ENCODE measurements at regions of chr1 and their contacts with region 1.

Region 1: DNA sequence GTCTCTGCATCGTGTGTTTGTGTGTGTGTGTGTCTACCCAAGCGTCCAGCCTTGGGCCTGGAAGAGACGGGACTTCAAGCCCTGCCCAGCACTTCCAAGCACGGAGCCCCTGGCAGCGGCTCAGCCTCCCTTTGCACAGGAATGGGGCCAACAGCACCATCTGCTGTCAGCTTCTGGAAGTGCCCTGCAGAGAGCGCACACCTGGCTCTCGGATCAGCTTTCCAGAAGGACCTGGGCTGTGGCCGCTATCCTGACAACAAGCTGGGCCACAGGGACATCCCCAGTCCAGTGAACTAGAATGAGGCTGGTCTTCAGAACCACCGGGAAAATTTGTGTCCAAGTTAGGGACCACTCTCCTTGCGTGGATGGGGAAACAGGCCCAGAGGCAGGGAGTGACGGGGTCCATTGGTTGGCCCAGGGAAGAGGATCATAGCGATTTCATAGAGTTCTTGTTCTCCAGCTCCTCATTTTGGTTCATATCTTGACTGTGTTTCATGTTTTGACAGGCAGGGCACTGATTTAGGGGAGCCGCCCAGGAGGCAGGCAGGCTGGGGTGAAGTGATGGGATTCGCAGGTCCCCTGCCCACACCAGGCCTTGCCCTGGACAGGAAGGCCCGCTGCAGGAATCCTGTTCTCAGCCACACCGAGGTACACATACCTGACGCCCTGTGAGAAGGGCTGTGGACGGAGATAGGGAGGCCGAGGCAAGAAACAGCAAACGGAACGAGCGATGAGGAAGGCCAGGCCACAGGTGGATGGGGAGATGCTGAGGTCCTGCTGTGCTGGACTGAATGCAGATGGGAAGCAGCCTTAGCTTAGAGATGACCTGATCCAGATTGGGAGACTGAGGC is 38.4 kb downstream of the TAS1R2 start:
- DNase-seq: peak; percentile 59

Region 2: DNA sequence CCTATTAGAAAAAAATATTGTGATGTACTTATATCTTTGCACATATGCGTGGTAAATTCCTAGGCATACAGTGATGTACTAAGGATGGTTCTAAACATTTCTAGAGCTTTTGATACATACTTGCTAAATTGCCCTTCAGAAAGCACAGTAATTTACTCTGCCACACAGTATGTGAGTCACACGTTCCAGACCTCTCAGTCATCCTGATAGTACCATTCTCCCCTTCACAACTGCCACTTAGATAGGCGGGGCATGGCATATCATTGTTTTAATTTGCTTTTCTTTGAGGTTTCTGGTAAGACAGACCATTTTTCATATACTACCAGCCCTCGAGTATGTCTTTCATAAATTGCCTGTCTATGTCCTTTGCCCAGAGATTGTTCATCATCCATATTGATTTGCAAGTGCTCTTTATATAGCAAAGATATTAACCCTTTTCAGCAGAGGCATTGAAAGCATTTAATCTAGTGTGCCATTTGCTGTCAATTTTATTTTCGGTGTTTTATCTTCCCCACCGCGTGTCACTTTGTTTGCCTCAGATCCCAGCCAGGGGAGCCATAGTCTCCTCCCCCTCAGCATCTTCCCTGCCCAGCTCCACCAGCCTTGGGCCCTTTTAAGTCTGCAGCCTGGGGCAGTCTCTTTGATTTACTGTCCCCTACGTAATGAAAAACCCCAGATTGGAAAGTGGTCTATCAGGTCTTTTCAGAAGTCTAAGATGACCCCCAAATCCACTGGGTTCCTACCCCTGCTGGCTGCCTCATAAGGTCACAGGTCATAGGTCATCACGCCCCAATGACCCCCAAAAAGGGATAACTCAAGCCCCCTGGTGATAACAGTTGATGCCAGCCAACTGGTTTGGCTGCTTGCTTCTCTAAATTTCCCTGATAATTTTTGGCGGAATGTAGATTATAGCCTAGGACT is 202.2 kb before region 1 on chr1:
- in situ Hi-C with region 1: loop called (anchors 25 kb)
- DNase-seq: no peak

Region 3: GRCh38 chr1:18861082-18861481 is 40.1 kb after region 1 on chr1:
- in situ Hi-C with region 1: no loop called
- DNase-seq: no peak

Region 4: DNA sequence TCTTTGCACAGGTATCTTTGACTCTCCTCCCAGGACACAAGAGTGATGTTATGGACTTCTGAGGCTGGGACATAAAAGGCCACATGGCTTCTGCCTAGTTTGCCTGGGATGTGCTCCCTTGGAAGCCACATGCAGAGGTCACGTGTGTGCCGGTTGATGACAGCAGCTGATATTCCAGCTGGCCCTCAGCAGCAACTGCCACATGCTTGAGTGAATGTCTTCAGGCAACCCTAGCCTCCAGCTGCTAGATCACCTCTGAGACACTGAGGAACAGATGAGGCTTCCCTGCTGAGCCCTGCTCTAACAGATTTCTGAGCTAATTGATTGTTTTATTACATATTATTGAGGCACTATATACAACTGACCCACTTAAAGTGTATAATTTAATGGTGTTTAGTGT is 479.2 kb after region 1 on chr1:
- in situ Hi-C with region 1: no loop called
- DNase-seq: no peak